ENCODE measurements at regions of chrX and their contacts with region 1.

Region 1: GRCh38 chrX:148049441-148049840 is 68.3 kb downstream of the FMR1NB start:
- DNase-seq: no peak
- H3K4me3 ChIP-seq: no peak overlapping the region
- H3K27ac ChIP-seq: no peak overlapping the region
- H3K4me1 ChIP-seq: no peaks in the 10 kb centered on the region
- H3K27me3 ChIP-seq: no peaks in the 10 kb centered on the region
- CTCF ChIP-seq: peak in 2 of 3 experiments; percentile 28 to 46

Region 2: GRCh38 chrX:147800663-147801062 is 248.8 kb before region 1 on chrX:
- intact Hi-C with region 1: no loop called
- DNase-seq: no peak
- H3K4me3 ChIP-seq: no peak overlapping the region
- H3K27ac ChIP-seq: no peak overlapping the region
- H3K4me1 ChIP-seq: no peaks in the 10 kb centered on the region
- H3K27me3 ChIP-seq: no peaks in the 10 kb centered on the region
- CTCF ChIP-seq: no peak

Region 3: DNA sequence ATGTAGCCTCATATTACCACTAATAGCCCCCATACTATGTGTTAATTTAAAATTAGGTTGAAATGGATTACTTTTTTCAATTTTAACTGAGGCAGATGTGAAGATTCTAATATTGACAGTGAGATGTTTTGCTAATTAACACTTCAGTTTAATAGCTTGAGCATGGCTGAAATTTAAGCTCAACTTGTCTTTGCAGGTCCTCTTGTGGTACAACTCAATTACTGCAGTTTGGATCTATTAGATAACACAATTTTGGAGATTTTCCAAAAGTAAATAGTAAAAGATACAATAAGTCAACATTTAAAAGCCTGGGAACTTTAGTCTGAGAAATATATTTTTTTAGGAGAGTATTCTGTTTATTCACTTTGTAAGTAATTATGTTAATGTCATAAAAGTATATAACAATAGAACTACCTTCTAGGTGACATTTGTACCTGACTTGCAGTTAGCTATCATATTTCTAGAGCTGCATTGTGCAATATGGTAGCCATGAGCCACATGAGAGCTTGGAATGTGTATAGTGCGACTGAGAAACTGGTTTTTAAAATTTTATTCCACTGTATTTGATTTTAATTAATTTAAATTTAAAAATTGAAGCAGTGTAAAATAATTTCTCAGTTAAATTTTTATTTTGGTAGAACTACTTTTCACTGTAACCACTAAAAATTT is 210.8 kb before region 1 on chrX:
- intact Hi-C with region 1: no loop called
- DNase-seq: no peak
- H3K4me3 ChIP-seq: no peak overlapping the region
- H3K27ac ChIP-seq: no peak overlapping the region
- H3K4me1 ChIP-seq: no peaks in the 10 kb centered on the region
- H3K27me3 ChIP-seq: no peaks in the 10 kb centered on the region
- CTCF ChIP-seq: peak in 1 of 3 experiments; percentile 6

Region 4: DNA sequence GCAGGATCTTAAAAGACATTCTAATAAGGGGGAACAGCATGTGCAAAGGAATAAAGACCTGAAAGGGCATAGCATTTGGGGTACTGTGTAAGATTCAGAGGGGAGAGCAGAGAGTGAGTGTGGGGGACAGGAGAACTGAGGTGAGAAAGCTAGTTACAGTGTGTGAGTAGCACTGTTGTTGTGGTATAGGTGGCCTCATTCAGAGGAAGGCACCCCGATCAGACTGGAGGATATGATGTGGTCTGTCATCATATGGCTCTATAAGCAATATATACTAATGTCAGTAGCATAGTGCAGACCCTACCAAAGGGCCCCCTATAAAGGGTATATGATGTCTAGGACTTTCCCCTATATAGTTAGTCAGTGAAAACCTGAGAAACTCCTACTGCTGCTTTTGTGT is 107.5 kb after region 1 on chrX:
- intact Hi-C with region 1: no loop called
- DNase-seq: no peak
- H3K4me3 ChIP-seq: no peak overlapping the region
- H3K27ac ChIP-seq: no peak overlapping the region
- H3K4me1 ChIP-seq: no peaks in the 10 kb centered on the region
- H3K27me3 ChIP-seq: no peaks in the 10 kb centered on the region
- CTCF ChIP-seq: no peak

Region 5: DNA sequence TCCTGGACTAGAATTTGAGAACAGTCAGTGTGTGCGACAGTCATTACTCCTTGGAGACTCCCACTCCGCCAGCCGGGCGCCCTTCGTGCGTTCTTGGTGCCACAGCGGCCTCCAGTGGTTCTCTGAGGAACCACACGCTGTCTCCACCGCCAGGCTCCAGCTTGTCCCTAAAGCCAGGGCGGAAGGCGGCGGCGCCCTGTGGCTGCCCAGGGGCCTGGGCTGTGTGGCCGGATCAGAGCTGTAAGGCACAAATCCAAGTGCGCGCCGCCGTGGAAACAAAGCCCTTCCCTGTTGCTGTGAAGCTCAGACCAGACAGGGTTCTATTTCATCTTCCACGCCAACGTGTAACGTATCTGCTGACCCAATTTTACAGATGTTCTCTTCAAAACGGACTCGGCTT is 1421.5 kb after region 1 on chrX:
- intact Hi-C with region 1: loop called (anchors 2 kb)
- DNase-seq: peak in 1 of 2 donors; percentile 81
- H3K4me3 ChIP-seq: no peak overlapping the region
- H3K27ac ChIP-seq: no peak overlapping the region
- H3K4me1 ChIP-seq: no peaks in the 10 kb centered on the region
- H3K27me3 ChIP-seq: no peaks in the 10 kb centered on the region
- CTCF ChIP-seq: peak; percentile 77 to 87 (median 86)

Measured in ascending aorta (tissue), 2 donors.